HepG2 (cell line): ENCODE measurements at regions of chr11 and their contacts with region 1.

Region 1: DNA sequence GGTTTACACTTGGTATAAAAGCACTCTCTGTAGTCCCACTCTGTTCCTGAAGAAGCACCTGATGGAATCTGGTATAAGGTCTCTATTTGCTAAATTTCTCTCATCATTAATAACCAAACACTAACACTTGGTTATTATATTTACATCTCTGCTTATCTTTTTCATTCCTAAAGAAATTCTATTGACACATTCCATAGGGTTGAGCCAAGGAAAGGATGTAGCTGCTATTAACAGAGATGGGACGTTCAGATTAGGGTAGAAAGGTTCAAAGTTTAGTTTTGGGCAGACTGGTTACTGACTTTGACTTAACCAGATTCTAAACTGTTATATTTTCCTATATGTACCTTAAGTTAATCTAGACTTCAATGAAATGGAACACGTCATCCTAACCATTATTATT is 91.5 kb downstream of the RSF1 start:
- DNase-seq: peak; percentile 82
- ATAC-seq: peak; percentile 69
- H3K4me3 ChIP-seq: no peak overlapping the region; a peak in 1 of 6 replicates
- H3K27ac ChIP-seq: no peak overlapping the region
- H3K4me1 ChIP-seq: peaks cover 34% of the 10 kb centered on the region
- H3K27me3 ChIP-seq: no peaks in the 10 kb centered on the region
- CTCF ChIP-seq: no peak
- EP300 ChIP-seq: no peak
- POLR2A ChIP-seq: no peak
- RAD21 ChIP-seq: no peak

Region 2: DNA sequence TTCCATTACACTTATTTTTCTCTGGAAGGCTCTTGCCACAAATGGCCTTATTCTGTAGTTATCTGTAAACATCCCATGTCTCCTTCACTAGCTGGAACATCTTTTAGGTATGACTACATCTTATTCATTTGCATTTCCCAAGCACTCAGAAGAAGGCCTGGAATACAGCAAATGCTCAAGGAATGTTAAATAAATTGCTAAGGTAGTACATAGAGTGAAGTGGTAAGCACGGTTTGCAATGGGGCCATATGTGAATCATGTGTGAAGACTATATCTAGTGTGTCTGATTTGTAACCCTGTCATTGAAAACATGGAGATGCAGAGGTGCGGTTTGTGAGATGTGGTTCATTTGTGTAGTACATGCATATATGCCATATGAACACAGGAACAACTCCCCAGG is 461.1 kb before region 1 on chr11:
- CTCF ChIA-PET with region 1: no interaction called
- POLR2A ChIA-PET with region 1: no interaction called
- in situ Hi-C with region 1: no loop called
- intact Hi-C with region 1: no loop called
- DNase-seq: no peak
- ATAC-seq: no peak
- H3K4me3 ChIP-seq: no peak overlapping the region
- H3K27ac ChIP-seq: no peak overlapping the region
- H3K4me1 ChIP-seq: no peaks in the 10 kb centered on the region
- H3K27me3 ChIP-seq: no peaks in the 10 kb centered on the region
- CTCF ChIP-seq: no peak
- EP300 ChIP-seq: no peak
- POLR2A ChIP-seq: no peak
- RAD21 ChIP-seq: no peak

Region 3: GRCh38 chr11:77710358-77710757 is 18.7 kb before region 1 on chr11:
- CTCF ChIA-PET with region 1: no interaction called
- POLR2A ChIA-PET with region 1: no interaction called
- in situ Hi-C with region 1: no loop called
- intact Hi-C with region 1: loop called (anchors 2 kb)
- DNase-seq: peak; percentile 36
- ATAC-seq: no peak
- H3K4me3 ChIP-seq: no peak overlapping the region
- H3K27ac ChIP-seq: no peak overlapping the region
- H3K4me1 ChIP-seq: peaks cover 24% of the 10 kb centered on the region
- H3K27me3 ChIP-seq: no peaks in the 10 kb centered on the region; a peak in 1 of 5 replicates
- CTCF ChIP-seq: no peak
- EP300 ChIP-seq: no peak
- POLR2A ChIP-seq: no peak
- RAD21 ChIP-seq: no peak

Region 4: DNA sequence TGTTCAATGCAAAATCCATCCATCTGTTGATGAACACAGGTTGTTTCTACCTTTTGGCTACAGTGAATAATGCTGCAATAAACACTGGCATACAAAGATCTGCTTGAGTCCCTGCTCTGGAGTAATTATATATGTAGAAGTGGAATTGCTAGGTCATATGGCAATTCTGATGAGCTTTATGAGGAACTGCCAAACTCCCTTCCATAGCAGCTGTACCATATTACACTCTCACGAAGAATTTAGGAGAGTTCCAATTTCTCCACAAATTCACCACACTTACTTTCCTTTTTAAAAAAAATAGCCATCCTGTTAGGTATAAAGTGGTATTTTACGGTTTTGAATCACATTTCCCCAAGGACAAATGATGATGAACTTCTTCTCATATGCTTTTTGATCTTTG is 29.3 kb after region 1 on chr11:
- CTCF ChIA-PET with region 1: no interaction called
- POLR2A ChIA-PET with region 1: no interaction called
- in situ Hi-C with region 1: no loop called
- intact Hi-C with region 1: no loop called
- DNase-seq: no peak
- ATAC-seq: no peak
- H3K4me3 ChIP-seq: no peak overlapping the region
- H3K27ac ChIP-seq: no peak overlapping the region
- H3K4me1 ChIP-seq: no peaks in the 10 kb centered on the region
- H3K27me3 ChIP-seq: no peaks in the 10 kb centered on the region
- CTCF ChIP-seq: no peak
- EP300 ChIP-seq: no peak
- POLR2A ChIP-seq: no peak
- RAD21 ChIP-seq: no peak